Kidney (tissue), 22 donors: ENCODE measurements at regions of chr6 and their contacts with region 1.

Region 1: GRCh38 chr6:47309291-47310130 is at the start of gene TNFRSF21:
- DNase-seq: peak; percentile 95 to 98 (median 97)
- H3K4me3 ChIP-seq: peak within 1 kb of the TSS; percentile 68 to 81 (median 75)
- H3K27ac ChIP-seq: peak within 1 kb of the TSS; percentile 85 to 93
- H3K4me1 ChIP-seq: peaks cover 0 to 11% (median 3%) of the 10 kb centered on the region in 3 donors
- H3K27me3 ChIP-seq: no peaks in the 10 kb centered on the region
- CTCF ChIP-seq: peak; percentile 94
- total RNA-seq, gene TNFRSF21: 45.5 TPM

Region 2: GRCh38 chr6:46876126-46876525 is 433.4 kb before region 1 on chr6:
- intact Hi-C with region 1: no loop called
- DNase-seq: peak in 2 of 5 donors; percentile 37 to 87
- H3K4me3 ChIP-seq: no peak overlapping the region
- H3K27ac ChIP-seq: no peak overlapping the region
- H3K4me1 ChIP-seq: no peaks in the 10 kb centered on the region
- H3K27me3 ChIP-seq: no peaks in the 10 kb centered on the region
- CTCF ChIP-seq: no peak

Region 3: GRCh38 chr6:47103931-47104330 is 205.6 kb before region 1 on chr6:
- intact Hi-C with region 1: loop called (anchors 5 kb)
- DNase-seq: no peak
- H3K4me3 ChIP-seq: no peak overlapping the region
- H3K27ac ChIP-seq: no peak overlapping the region
- H3K4me1 ChIP-seq: no peaks in the 10 kb centered on the region
- H3K27me3 ChIP-seq: no peaks in the 10 kb centered on the region
- CTCF ChIP-seq: no peak

Region 4: GRCh38 chr6:47134476-47135189 is 174.9 kb before region 1 on chr6:
- intact Hi-C with region 1: no loop called
- DNase-seq: no peak
- H3K4me3 ChIP-seq: no peak overlapping the region
- H3K27ac ChIP-seq: no peak overlapping the region
- H3K4me1 ChIP-seq: peaks cover 0 to 5% (median 2%) of the 10 kb centered on the region in 3 donors
- H3K27me3 ChIP-seq: no peaks in the 10 kb centered on the region
- CTCF ChIP-seq: no peak